ENCODE measurements at regions of chr1 and their contacts with region 1.

Region 1: DNA sequence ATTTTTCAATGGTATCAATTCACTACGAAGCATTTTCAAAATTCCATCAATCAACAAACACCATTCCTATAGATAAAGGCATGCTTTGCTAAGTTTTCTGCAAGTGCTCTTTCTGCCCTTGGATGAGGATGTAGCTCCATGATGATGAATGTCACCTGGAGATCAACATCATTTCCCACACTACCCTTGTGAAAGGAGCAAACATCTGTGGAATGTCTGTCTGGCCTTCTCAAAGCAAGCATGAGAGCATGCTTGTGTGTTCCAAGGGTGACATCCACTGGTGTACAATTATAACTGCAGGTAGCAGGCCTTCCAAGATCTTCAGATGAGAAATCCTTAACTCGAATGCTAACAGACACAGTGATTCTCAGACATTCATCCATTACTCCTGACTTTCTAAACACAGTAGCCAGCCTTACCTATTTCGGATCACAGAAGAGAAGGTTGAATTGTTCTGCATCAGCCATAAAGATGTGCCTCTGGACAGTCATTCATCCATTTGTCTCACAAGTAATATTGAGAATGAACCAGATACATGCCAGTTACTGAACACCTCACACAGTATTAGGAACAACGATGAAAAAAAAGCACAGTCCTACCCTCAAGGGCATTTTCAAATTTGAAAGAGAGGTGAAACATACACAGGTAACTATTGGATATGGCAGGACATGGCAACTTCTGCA is 162.4 kb downstream of the TPR start:
- DNase-seq: peak in 1 of 2 experiments; percentile 21
- H3K4me3 ChIP-seq: no peak overlapping the region
- H3K27ac ChIP-seq: no peak overlapping the region
- H3K4me1 ChIP-seq: no peaks in the 10 kb centered on the region
- H3K27me3 ChIP-seq: no peaks in the 10 kb centered on the region
- CTCF ChIP-seq: peak in 2 of 3 experiments; percentile 86 to 92; a peak in 3 of 4 replicates
- EP300 ChIP-seq: peak in 1 of 2 experiments; percentile 6; a peak in 1 of 3 replicates
- POLR2A ChIP-seq: no peak
- RAD21 ChIP-seq: peak; percentile 99

Region 2: DNA sequence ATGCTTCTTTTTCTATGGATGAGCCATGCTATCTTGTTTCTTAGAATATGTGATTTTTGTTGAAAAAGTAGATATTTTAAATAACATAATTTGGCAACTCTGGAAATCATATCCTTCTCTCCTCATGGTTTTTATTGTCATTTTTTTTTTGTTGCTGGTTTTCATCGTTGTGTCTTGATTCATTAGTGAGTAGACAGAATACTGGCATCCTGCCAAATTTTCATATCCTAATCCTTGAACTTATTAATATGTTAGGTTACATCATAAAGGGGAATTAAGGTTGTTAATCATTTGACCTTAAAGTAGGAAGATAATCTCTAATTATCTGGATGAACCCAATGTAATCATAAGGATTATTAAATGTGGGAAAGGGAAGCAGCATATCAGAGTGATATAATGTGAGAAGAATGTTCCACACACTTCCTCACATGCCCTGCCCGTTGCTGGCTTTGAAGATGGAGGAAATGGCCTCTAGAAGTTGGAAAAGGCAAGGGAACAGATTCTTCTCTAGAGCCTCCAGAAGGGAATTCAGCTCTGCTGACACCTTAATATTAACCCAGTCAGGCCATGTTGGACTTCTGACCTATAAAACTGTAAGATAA is 178.8 kb before region 1 on chr1:
- CTCF ChIA-PET with region 1: no interaction called
- POLR2A ChIA-PET with region 1: no interaction called
- DNase-seq: no peak
- H3K4me3 ChIP-seq: no peak overlapping the region
- H3K27ac ChIP-seq: no peak overlapping the region
- H3K4me1 ChIP-seq: no peaks in the 10 kb centered on the region
- H3K27me3 ChIP-seq: peaks cover 0 to 1% (median 0%) of the 10 kb centered on the region in 4 experiments; a peak in 1 of 7 replicates
- CTCF ChIP-seq: no peak
- EP300 ChIP-seq: no peak
- POLR2A ChIP-seq: no peak
- RAD21 ChIP-seq: no peak

Region 3: DNA sequence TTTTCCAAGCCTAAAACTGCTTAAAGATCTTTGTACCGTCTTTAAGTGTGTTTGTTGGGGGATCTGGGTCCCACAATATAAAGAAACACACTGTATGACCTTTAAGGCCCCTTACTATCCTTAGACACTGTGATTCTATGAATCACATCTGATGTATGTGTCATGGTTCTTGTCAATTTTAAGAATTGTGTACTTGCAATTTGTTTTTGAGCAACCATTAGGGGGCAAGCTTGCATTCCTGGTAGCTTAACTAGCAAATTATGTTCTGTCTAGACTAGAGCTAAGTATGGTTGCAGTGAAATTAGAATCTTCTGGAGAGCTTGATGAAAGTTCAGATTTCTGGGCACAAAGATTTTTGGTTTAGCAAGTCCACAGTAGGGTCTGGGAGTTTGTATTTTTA is 57.1 kb before region 1 on chr1:
- CTCF ChIA-PET with region 1: interaction called, 12 read pairs
- POLR2A ChIA-PET with region 1: no interaction called
- DNase-seq: no peak
- H3K4me3 ChIP-seq: no peak overlapping the region
- H3K27ac ChIP-seq: no peak overlapping the region
- H3K4me1 ChIP-seq: no peaks in the 10 kb centered on the region
- H3K27me3 ChIP-seq: no peaks in the 10 kb centered on the region
- CTCF ChIP-seq: peak in 1 of 3 experiments; percentile 56; a peak in 2 of 4 replicates
- EP300 ChIP-seq: no peak
- POLR2A ChIP-seq: no peak
- RAD21 ChIP-seq: peak; percentile 58 to 63

Region 4: DNA sequence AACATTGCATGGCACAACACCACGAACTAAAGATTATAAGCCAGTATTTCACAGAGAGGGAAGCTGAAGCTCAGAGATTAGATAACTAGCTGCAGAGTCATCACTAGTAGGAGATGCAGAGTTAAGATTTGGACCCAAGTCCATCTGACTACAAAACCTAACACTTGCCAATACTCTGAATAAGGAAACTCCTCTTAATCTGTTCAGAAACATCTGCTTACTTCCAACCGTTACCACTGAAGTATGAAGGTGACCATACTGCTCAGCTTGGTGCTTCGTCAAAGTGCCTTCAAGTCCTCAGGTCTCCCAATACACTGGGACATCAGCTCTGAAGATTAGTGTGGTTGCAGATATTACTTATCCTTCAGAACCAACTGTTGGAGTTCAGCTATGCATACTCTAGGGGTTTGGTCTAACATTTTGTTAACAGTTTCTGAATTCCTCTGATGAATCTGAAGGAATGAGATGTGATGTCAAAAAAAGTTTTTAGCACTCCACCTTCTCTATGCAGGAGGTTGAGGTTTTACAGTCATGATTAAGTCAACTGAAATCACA is 17.2 kb before region 1 on chr1:
- CTCF ChIA-PET with region 1: no interaction called
- POLR2A ChIA-PET with region 1: no interaction called
- DNase-seq: no peak
- H3K4me3 ChIP-seq: no peak overlapping the region
- H3K27ac ChIP-seq: no peak overlapping the region
- H3K4me1 ChIP-seq: no peaks in the 10 kb centered on the region
- H3K27me3 ChIP-seq: no peaks in the 10 kb centered on the region
- CTCF ChIP-seq: no peak
- EP300 ChIP-seq: no peak
- POLR2A ChIP-seq: no peak
- RAD21 ChIP-seq: no peak

Measured in H1 (cell line).